ENCODE measurements at regions of chr5 and their contacts with region 1.

Region 1: GRCh38 chr5:157761690-157762621 is 18.4 kb downstream of the LSM11 start:
- DNase-seq: peak in 1 of 2 donors; percentile 67
- ATAC-seq: peak; percentile 79 to 89 (median 81)
- H3K4me3 ChIP-seq: no peak overlapping the region
- H3K4me3 Mint-ChIP-seq: no peak overlapping the region
- H3K27ac ChIP-seq: no peak overlapping the region
- H3K27ac Mint-ChIP-seq: no peak overlapping the region
- H3K4me1 ChIP-seq: no peaks in the 10 kb centered on the region
- H3K4me1 Mint-ChIP-seq: no peaks in the 10 kb centered on the region
- H3K27me3 ChIP-seq: no peaks in the 10 kb centered on the region
- H3K27me3 Mint-ChIP-seq: no peaks in the 10 kb centered on the region
- CTCF ChIP-seq: peak; percentile 83

Region 2: DNA sequence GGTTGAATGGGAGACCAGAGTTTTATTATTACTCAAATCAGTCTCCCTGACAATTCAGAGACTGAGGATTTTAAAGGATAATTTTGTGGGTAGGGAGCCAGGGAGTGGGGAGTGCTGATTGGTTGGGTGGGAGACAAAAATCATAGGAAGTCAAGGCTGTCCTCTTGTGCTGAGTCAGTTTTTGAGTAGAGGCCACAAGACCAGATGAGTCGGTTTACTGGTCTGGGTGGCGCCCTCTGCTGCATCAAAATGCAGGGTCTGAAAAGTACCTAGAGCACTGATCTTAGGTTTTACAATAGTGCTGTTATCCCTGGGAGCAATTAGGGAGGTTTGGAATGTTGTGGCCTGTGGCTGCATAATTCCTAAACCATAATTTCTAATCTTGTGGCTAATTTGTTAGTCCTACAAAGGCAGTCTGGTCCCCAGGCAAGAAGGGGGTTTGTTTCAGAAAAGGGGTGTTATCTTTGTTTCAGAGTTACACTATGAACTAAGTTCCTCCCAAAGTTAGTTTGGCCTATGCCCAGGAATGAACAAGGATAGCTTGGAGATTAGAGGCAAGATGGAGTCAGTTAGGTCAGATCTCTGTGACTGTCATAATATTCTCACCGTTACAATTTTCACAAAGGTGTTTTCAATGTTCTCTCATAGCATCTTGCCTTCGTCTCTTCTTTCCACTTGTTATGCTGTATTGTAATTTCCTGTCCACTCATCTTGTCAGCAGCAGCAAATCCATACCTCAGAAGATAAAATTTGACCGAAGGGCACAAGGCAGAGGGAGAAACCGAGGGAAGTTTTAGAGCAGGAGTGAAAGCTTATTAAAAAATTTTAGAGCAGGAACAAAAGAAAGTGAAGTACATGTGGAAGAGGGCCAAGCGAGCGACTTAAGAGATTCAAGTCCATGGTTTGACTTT is 156.2 kb after region 1 on chr5:
- intact Hi-C with region 1: loop called (anchors 1 kb)
- DNase-seq: peak; percentile 50 to 69
- ATAC-seq: peak; percentile 70 to 85 (median 82)
- H3K4me3 ChIP-seq: no peak overlapping the region
- H3K4me3 Mint-ChIP-seq: no peak overlapping the region
- H3K27ac ChIP-seq: no peak overlapping the region
- H3K27ac Mint-ChIP-seq: no peak overlapping the region
- H3K4me1 ChIP-seq: peaks cover 8% of the 10 kb centered on the region
- H3K4me1 Mint-ChIP-seq: peaks cover 18 to 21% of the 10 kb centered on the region in 2 donors
- H3K27me3 ChIP-seq: no peaks in the 10 kb centered on the region
- H3K27me3 Mint-ChIP-seq: peaks cover 10 to 22% of the 10 kb centered on the region in 2 donors
- CTCF ChIP-seq: peak; percentile 64

Region 3: DNA sequence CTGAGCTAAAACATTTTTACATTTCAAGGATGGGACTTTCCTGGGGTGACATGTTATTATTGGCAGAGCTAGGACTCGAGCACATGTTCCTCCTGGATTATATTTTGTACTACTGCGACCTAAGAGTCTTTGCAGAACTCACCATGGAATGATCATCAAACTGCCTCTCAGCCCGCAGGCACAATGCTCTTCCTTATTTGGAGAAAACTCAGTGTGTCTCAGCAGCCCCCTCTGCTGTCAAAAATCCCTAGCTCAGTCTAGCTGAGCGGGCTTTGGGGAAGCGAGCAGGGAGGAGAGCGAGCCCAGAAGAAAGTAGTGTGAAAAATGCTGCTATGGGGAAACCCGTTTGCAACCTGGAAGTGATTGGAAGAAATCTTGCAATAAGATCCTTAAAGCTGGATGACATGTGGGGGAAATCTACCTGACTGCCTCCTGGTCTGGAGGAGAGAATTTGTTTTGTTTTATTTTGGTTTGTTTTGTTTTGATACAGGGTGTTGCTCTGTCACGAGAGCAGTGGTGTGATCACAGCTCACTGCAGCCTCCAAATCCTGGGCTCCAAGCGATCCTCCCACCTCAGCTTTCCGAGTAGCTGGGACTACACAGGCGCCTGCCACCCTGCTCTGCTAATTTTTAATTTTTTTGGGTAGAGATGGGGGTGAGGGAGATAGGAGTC is 186.9 kb after region 1 on chr5:
- intact Hi-C with region 1: loop called (anchors 1 kb)
- DNase-seq: peak; percentile 53 to 87
- ATAC-seq: peak; percentile 92 to 99 (median 95)
- H3K4me3 ChIP-seq: no peak overlapping the region
- H3K4me3 Mint-ChIP-seq: no peak overlapping the region
- H3K27ac ChIP-seq: no peak overlapping the region
- H3K27ac Mint-ChIP-seq: no peak overlapping the region
- H3K4me1 ChIP-seq: no peaks in the 10 kb centered on the region
- H3K4me1 Mint-ChIP-seq: peaks cover 6 to 7% of the 10 kb centered on the region in 2 donors
- H3K27me3 ChIP-seq: no peaks in the 10 kb centered on the region
- H3K27me3 Mint-ChIP-seq: peaks cover 13 to 23% of the 10 kb centered on the region in 2 donors
- CTCF ChIP-seq: peak; percentile 68

Region 4: GRCh38 chr5:157994906-157995519 is 233.1 kb after region 1 on chr5:
- intact Hi-C with region 1: loop called (anchors 1 kb)
- DNase-seq: peak in 1 of 2 donors; percentile 68
- ATAC-seq: peak; percentile 69 to 87 (median 77)
- H3K4me3 ChIP-seq: no peak overlapping the region
- H3K4me3 Mint-ChIP-seq: peak overlapping the region; percentile 40
- H3K27ac ChIP-seq: no peak overlapping the region
- H3K27ac Mint-ChIP-seq: no peak overlapping the region
- H3K4me1 ChIP-seq: peaks cover 19% of the 10 kb centered on the region
- H3K4me1 Mint-ChIP-seq: peaks cover 12 to 13% of the 10 kb centered on the region in 2 donors
- H3K27me3 ChIP-seq: peaks cover 22% of the 10 kb centered on the region
- H3K27me3 Mint-ChIP-seq: peaks cover 35 to 61% of the 10 kb centered on the region in 2 donors
- CTCF ChIP-seq: peak; percentile 58

Region 5: DNA sequence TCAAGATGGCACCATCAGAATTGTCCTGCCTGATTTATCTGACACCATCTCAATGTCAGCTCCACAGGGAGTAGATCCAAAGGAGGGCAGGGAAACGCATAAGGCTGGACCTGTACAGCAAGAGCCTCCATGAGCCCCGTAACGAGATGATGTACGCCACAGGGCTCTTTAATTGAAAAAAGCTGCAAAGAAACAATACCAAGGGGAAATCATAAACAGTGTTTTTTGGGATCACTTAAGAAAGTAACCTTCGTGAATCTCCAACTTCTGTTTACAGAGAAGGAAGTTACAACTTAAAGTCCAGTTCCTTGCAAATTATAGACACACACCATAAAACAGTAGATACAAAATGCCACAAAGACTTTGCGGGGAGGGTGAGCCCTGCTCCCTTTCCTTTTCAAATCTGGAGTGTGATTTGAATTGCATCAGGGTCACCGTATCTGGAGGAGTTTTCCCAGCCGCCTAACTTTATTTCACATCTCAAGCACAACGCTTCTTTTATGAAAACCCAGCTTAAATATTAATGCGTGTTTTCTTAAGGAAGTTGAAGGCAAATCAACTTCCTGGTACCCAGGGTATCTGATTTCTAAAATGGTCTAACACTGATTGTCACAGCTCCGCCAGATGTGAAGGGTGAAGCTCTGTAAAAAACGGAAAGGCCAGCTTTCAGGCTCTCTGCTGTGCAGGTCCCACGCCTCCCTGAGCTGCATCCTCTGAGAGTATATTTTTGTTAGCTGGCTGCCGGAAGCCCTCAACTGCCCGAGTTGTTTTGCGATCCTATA is 1248.9 kb after region 1 on chr5:
- intact Hi-C with region 1: no loop called
- DNase-seq: no peak
- ATAC-seq: no peak
- H3K4me3 ChIP-seq: peak overlapping the region; percentile 25
- H3K4me3 Mint-ChIP-seq: peak overlapping the region; percentile 17
- H3K27ac ChIP-seq: peak overlapping the region; percentile 66
- H3K27ac Mint-ChIP-seq: no peak overlapping the region
- H3K4me1 ChIP-seq: peaks cover 3% of the 10 kb centered on the region
- H3K4me1 Mint-ChIP-seq: peaks cover 6 to 9% of the 10 kb centered on the region in 2 donors
- H3K27me3 ChIP-seq: no peaks in the 10 kb centered on the region
- H3K27me3 Mint-ChIP-seq: peaks cover 2 to 36% of the 10 kb centered on the region in 2 donors
- CTCF ChIP-seq: no peak